H1 (cell line): ENCODE measurements at regions of chr11 and their contacts with region 1.

Region 1: GRCh38 chr11:130213143-130213978 is 53.8 kb downstream of the ST14 start:
- DNase-seq: peak; percentile 31 to 96
- H3K4me3 ChIP-seq: no peak overlapping the region
- H3K27ac ChIP-seq: no peak overlapping the region
- H3K4me1 ChIP-seq: peaks cover 0 to 16% (median 12%) of the 10 kb centered on the region in 4 experiments; a peak in 6 of 7 replicates
- H3K27me3 ChIP-seq: no peaks in the 10 kb centered on the region
- CTCF ChIP-seq: peak; percentile 90 to 96 (median 94)
- EP300 ChIP-seq: no peak
- POLR2A ChIP-seq: no peak
- RAD21 ChIP-seq: peak; percentile 99

Region 2: GRCh38 chr11:130413405-130414106 is 200.2 kb after region 1 on chr11:
- CTCF ChIA-PET with region 1: interaction called, 19 read pairs
- POLR2A ChIA-PET with region 1: interaction called, 3 read pairs
- DNase-seq: no peak
- H3K4me3 ChIP-seq: no peak overlapping the region
- H3K27ac ChIP-seq: no peak overlapping the region
- H3K4me1 ChIP-seq: no peaks in the 10 kb centered on the region; a peak in 1 of 7 replicates
- H3K27me3 ChIP-seq: no peaks in the 10 kb centered on the region
- CTCF ChIP-seq: no peak
- EP300 ChIP-seq: no peak
- POLR2A ChIP-seq: no peak
- RAD21 ChIP-seq: no peak